Cardiac septum (tissue), 1 donor: ENCODE measurements at regions of chr6 and their contacts with region 1.

Region 1: DNA sequence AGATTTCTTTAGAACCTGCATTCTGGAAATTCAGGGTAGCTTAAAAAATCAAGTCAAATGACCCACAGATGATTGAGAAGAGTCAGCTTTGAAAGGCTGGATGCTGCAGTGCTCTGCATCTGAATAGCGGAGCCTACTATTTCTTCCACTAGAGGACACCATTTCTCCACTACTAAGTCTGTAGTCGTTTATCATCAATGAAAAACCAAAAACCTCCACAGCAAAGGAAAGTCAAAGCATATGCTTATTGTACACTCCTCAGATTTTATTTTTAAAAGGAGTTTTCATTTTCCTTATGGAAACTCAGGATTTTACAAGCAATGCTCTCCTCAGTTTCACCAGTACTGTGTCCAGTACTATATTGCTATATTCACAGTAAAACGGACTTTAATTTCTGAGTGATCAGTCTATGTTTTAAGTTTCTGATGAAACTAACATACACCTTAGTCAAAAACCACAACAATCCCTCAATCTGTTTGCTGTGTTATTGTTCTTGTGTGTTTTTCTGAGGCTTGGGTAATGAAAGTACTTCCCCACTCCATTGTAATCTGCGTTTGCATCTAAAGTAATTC is 50.5 kb upstream of the ENPP5 start:
- DNase-seq: no peak

Region 2: GRCh38 chr6:45421709-45422502 is 799.4 kb before region 1 on chr6:
- intact Hi-C with region 1: no loop called
- DNase-seq: peak; percentile 84

Region 3: GRCh38 chr6:46072866-46073265 is 148.4 kb before region 1 on chr6:
- intact Hi-C with region 1: no loop called
- DNase-seq: no peak

Region 4: GRCh38 chr6:46410334-46410953 is 189.1 kb after region 1 on chr6:
- intact Hi-C with region 1: loop called (anchors 5 kb)
- DNase-seq: no peak

Region 5: GRCh38 chr6:46491628-46492547 is 270.6 kb after region 1 on chr6:
- intact Hi-C with region 1: loop called (anchors 2 kb)
- DNase-seq: peak; percentile 84